ENCODE measurements at regions of chr1 and their contacts with region 1.

Region 1: DNA sequence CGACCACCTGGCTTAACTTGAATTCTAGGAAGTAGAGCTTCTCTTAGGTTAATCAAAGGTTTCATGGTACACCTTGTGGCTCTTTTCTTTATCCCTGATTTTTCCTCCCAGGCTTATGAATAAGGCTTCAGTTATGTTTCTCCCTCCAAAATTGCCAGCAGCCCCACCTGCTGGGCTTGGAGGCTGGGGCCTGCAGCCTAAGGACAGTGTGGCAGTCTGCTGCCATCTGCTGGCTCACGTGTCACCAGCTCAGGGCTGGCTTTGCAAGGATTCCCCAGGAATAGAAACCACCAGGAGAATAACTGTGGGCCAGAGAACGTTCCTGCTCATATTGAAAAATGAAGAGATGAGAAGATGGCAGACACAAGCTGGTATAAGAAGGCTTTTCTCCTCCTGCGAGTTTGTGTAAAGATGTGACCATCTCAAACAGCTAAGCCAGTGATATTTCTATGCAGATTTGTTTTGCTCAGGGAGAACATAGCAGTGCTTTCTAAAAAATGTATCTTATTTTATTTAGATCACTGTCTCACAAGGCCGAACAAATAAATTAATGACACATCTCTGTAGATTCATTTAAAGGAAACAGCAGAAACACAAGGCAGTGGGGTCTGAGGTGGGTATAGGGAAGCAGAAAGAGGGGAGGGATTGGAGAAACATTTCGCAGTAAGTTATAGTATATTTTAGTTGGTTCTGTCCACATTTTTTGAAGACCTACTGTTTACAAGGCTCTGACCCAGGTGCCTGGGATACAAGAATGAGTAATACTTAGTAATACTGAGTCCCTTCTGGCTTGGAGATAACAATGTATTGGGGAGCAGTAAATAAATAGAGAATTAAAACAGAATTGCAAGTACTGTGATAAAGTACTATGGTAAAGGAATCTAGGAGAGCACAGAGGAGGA is 291.1 kb upstream of the SGIP1 start:
- ATAC-seq: peak; percentile 59 to 99 (median 92)
- H3K4me3 ChIP-seq: no peak overlapping the region
- H3K27ac ChIP-seq: no peak overlapping the region
- H3K4me1 ChIP-seq: peaks cover 24 to 27% of the 10 kb centered on the region in 2 donors

Region 2: DNA sequence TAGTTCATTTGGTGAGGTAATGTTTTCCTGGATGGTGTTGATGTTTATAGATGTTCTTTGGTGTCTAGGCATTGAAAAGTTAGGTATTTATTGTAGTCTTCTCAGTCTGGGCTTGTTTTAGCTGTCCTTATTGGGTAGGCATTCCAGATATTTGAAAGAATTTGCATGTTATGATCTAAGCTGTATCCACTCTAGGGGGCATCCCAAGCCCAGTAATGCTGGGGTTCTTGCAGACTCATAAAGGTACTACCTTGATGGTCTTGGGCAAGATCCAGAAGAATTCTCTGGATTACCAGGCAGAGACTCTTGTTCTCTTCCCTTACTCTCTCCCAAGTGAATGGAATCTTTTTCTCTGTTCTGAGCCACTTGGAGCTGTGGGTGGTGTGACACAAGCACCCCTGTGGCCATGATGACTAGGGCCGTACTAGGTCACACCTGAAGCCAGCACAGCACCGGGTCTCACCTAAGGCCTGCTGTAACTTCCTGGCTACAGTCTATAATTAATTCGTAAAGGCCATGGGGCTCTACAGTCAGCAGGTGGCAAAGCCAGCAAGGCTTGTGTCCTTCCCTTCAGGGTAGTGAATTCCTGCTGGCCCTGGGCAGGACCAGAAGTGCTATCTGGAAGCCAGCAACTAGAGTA is 525.0 kb before region 1 on chr1:
- in situ Hi-C with region 1: loop called in 2 of 9 experiments (anchors 25 kb)
- ATAC-seq: peak in 3 of 8 experiments; percentile 61 to 95 (median 87)
- H3K4me3 ChIP-seq: no peak overlapping the region
- H3K27ac ChIP-seq: no peak overlapping the region
- H3K4me1 ChIP-seq: peaks cover 0 to 2% of the 10 kb centered on the region in 2 donors

Region 3: DNA sequence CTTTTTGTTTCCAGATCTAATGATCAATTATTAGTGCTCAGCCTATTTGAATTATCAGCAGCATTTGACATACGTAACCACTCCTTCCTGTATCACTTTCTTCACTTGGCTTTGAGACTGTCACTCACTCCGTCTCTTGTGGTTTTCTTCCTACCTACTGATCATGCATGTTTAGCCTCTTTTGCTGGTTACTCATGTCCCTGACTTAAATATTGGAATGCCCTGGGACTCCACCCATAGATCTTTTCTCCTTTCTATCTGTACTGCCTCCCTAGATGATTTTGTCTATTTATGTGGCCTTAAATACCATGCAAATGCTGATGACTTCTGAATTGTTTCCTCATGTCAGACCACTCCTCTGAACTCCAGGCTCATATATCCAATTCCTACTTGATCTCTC is 507.9 kb before region 1 on chr1:
- in situ Hi-C with region 1: loop called in 1 of 9 experiments (anchors 25 kb)
- ATAC-seq: peak in 2 of 8 experiments; percentile 99
- H3K4me3 ChIP-seq: no peak overlapping the region
- H3K27ac ChIP-seq: no peak overlapping the region
- H3K4me1 ChIP-seq: no peaks in the 10 kb centered on the region

Region 4: DNA sequence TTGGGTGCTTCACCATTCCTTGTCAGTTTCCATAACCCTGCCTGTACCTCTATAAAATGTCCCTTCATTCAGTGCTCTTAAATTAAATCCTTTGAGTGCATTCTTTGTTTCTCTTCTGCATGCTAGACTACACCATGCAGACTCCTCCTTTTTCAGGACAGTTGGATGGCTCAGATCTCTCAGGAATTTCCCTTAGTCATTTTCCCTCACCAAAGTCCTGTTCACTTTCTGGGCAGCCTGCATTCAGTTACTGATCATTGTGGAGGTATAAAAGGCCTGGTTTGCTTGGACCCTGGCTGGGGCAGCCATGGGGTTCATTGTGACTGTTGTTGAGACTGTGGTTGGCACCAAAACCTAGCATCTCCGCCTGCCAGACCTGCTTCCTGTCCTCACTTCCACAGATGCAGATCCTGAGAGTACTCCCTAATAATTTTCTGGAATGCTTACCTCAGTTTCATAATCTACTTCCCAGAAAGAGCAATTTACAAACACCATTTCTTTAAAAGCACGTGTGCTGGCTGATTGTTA is 361.8 kb before region 1 on chr1:
- in situ Hi-C with region 1: no loop called
- ATAC-seq: peak in 3 of 8 experiments; percentile 16 to 84 (median 81)
- H3K4me3 ChIP-seq: no peak overlapping the region
- H3K27ac ChIP-seq: no peak overlapping the region
- H3K4me1 ChIP-seq: no peaks in the 10 kb centered on the region

Region 5: GRCh38 chr1:65958561-65959350 is 284.1 kb before region 1 on chr1:
- in situ Hi-C with region 1: loop called (anchors 5 to 25 kb)
- ATAC-seq: peak; percentile 49 to 80 (median 74)
- H3K4me3 ChIP-seq: no peak overlapping the region
- H3K27ac ChIP-seq: no peak overlapping the region
- H3K4me1 ChIP-seq: peaks cover 2 to 4% of the 10 kb centered on the region in 2 donors

Region 6: GRCh38 chr1:66374561-66375111 is 131.7 kb after region 1 on chr1:
- in situ Hi-C with region 1: no loop called
- ATAC-seq: peak in 3 of 8 experiments; percentile 12 to 88 (median 75)
- H3K4me3 ChIP-seq: no peak overlapping the region
- H3K27ac ChIP-seq: no peak overlapping the region
- H3K4me1 ChIP-seq: no peaks in the 10 kb centered on the region